Ascending aorta (tissue), 2 donors: ENCODE measurements at regions of chr22 and their contacts with region 1.

Region 1: GRCh38 chr22:25702040-25702439 is 39.9 kb upstream of the MYO18B start:
- DNase-seq: no peak
- H3K4me3 ChIP-seq: no peak overlapping the region
- H3K27ac ChIP-seq: no peak overlapping the region
- H3K4me1 ChIP-seq: no peaks in the 10 kb centered on the region
- H3K27me3 ChIP-seq: no peaks in the 10 kb centered on the region
- CTCF ChIP-seq: peak in 2 of 3 experiments; percentile 18 to 47

Region 2: DNA sequence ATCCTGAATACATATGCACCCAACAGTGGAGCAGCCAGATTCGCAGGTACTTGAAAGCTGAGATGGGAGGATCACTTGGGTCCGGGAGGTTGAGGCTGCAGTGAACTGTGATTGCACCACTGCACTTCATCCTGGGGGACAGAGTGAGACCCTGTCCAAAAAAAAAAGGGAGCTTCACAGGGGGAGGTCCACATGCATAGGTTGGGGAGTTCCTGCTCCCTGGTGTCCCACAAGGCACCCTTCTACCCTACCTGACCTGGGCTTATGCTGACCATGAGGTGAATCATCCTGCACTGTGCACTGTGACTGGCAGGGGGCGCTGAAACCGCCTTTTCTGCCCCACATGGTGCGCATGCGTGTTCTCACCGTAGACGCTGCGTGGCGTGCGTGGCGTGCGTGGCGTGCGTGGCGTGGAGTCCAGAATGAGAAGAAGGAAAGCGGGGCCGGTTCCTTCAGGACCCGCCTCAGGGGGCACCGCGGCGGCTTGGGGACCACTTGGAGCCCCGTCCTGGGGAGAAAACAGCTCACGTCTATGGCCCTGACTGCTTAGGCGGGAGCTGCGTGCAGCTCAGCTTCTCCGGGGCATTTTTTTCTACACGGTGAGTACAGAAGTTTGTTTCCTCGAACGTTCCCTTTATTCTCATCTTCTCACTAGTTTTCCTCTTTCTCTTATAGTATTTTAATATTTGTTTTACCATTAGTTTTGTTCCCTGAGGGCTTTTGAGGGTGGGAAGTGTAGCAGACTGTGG is 254.2 kb before region 1 on chr22:
- intact Hi-C with region 1: loop called (anchors 5 kb)
- DNase-seq: peak; percentile 41 to 92
- H3K4me3 ChIP-seq: peak overlapping the region; percentile 76 to 95
- H3K27ac ChIP-seq: peak overlapping the region; percentile 80 to 81
- H3K4me1 ChIP-seq: peaks cover 5 to 17% of the 10 kb centered on the region in 2 donors
- H3K27me3 ChIP-seq: no peaks in the 10 kb centered on the region
- CTCF ChIP-seq: peak; percentile 87 to 90 (median 89)

Region 3: DNA sequence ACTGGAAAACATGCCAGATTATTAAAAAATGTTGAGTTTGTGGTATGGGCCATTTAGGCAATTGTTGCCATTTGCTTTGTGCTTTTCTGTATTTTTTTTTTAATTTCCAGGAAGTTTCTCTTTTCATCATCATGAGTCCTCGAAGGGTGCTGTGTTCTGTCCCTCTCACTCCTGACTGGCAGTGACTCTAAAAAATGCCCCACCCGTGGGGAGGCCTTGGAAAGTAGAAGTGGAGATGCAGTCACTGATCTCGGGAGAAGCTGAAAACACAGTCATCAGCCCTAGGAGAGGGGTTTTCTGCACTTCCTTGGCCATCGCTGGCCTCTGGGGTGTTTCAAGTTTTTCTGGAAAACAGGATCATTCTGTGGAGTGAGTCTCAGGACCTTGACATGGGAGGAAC is 236.1 kb before region 1 on chr22:
- intact Hi-C with region 1: loop called (anchors 5 kb)
- DNase-seq: no peak
- H3K4me3 ChIP-seq: no peak overlapping the region
- H3K27ac ChIP-seq: no peak overlapping the region
- H3K4me1 ChIP-seq: no peaks in the 10 kb centered on the region
- H3K27me3 ChIP-seq: no peaks in the 10 kb centered on the region
- CTCF ChIP-seq: no peak